Esophagus squamous epithelium (tissue), 5 donors: ENCODE measurements at regions of chr17 and their contacts with region 1.

Region 1: DNA sequence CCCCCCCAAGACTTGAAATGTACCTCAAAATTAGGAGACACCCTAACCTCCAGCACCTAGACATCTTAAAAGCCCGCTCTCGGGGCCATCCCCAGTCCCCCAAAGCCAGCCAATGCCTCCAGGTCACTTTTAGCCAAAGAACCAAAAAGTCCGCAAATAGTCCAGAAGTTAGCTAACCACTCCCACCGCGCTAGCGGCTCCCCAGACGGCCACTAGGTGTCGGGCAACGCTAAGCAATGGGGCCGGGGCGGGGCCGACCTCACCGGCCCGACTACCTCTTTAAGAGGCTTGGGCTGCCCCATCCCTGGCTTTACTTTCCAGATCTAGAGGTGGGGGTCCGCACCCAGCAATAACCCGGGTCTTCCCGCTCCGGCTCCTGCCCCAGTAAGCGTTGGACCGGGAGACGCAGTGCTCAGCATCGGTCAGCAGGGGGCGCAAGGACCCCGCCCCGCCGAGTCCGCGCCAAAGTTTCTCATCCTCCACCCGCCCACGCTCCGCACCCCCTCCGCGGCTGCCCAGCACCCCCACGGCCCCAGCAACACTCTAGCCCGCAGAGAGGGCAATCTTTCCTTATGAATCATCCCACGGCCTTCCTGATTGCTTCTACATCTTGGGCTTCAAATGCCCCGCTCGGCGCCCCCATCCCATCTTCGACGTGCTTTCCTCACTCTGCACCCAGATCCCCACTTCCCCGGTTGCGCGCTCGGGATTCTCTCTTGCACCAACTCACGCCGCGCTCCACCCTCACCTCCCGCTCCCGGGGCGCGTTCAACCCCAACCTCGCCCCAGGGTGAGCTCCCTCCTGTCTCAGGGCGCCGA is 765 bp downstream of the COL1A1 start:
- DNase-seq: no peak
- H3K4me3 ChIP-seq: peak overlapping the region; percentile 26 to 74 (median 54)
- H3K27ac ChIP-seq: peak overlapping the region; percentile 71 to 91 (median 82)
- H3K4me1 ChIP-seq: peaks cover 24 to 98% (median 26%) of the 10 kb centered on the region in 3 donors
- H3K27me3 ChIP-seq: peaks cover 0 to 67% (median 0%) of the 10 kb centered on the region in 4 donors
- CTCF ChIP-seq: peak; percentile 96 to 100 (median 100)
- POLR2A ChIP-seq: no peak

Region 2: GRCh38 chr17:50269477-50270434 is 69.1 kb after region 1 on chr17:
- intact Hi-C with region 1: loop called (anchors 5 kb)
- DNase-seq: no peak
- H3K4me3 ChIP-seq: no peak overlapping the region
- H3K27ac ChIP-seq: peak overlapping the region in 3 of 4 donors; percentile 33 to 81 (median 55)
- H3K4me1 ChIP-seq: peaks cover 25 to 79% (median 30%) of the 10 kb centered on the region in 3 donors
- H3K27me3 ChIP-seq: peaks cover 0 to 16% (median 0%) of the 10 kb centered on the region in 4 donors
- CTCF ChIP-seq: peak; percentile 48 to 76 (median 72)
- POLR2A ChIP-seq: no peak

Region 3: DNA sequence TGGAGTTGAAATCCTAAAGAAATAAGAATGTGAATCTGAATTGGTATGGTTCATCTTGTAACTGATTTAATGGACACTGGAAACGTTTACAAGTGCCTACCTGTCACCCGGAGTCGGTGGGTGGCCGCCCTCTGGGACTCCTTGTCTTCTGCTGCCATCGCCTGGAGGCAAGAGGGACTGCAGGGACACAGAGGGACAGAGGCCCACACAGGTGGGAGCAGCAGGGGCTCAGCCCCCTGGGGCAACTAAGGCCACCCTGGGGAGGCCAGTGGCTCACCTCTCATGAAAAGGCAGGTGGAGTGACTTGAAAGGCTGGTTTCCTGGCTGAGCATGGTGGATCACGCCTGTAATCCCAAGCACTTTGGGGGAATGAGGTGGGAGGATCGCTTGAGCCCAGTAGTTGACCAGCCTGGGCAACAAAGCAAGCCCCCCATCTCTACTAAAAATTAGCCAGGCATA is 96.8 kb after region 1 on chr17:
- intact Hi-C with region 1: loop called (anchors 5 kb)
- DNase-seq: no peak
- H3K4me3 ChIP-seq: no peak overlapping the region
- H3K27ac ChIP-seq: no peak overlapping the region
- H3K4me1 ChIP-seq: no peaks in the 10 kb centered on the region
- H3K27me3 ChIP-seq: no peaks in the 10 kb centered on the region
- CTCF ChIP-seq: peak; percentile 67 to 99 (median 94)
- POLR2A ChIP-seq: no peak